ENCODE measurements at regions of chr10 and their contacts with region 1.

Region 1: DNA sequence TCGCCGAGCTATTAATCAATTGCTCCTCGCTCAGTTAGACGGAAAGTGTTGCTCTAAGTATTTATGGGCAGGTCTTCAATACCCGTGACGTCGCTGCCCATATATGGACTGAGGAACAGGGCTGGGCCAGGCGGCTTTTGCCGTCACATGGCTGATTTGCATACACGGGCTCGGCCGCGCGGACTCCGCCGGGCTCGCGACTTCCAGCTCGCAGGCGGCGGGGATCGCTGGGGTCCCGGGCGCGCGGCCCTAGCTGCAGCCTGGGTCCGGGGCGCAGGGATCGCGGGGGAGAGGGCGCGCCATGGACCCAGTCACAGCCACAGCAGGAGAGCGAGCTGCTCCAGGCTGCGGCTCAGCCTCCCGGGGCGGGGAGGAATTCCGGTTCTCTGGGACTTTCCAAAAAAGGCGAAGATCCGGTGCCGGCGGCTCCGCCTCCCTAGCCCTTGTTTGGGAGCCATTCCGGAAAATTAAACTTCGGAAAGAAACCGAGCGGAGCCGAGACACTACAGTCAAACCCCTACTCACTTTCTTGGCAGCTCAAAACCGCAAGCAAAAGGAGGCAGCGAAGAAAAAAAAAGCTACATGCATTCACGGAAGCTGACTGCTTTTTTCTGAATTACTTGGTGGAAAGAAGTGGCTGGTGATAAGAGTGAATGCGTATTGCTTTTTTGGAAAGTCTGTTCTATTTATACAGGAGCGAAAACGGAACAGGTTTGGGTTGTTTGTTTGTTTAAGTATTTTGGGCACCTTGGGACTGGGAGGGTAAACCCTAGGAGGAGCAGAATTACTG is at the start of gene EGR2:
- DNase-seq: peak; percentile 83
- H3K4me3 ChIP-seq: peak within 1 kb of the TSS; percentile 62 to 95 (median 68)
- H3K27ac ChIP-seq: peak within 1 kb of the TSS; percentile 79 to 93 (median 84)
- H3K4me1 ChIP-seq: peaks cover 21 to 46% (median 31%) of the 10 kb centered on the region in 3 donors
- H3K27me3 ChIP-seq: peaks cover 0 to 68% (median 8%) of the 10 kb centered on the region in 4 donors
- CTCF ChIP-seq: peak in 1 of 6 experiments; percentile 14
- POLR2A ChIP-seq: peak in 2 of 4 donors; percentile 1 to 27
- total RNA-seq, gene EGR2: under 0.01 to 0.62 (median 0.48) TPM

Region 2: GRCh38 chr10:62610649-62611229 is 205.8 kb before region 1 on chr10:
- intact Hi-C with region 1: loop called (anchors 10 kb)
- DNase-seq: no peak
- H3K4me3 ChIP-seq: no peak overlapping the region
- H3K27ac ChIP-seq: no peak overlapping the region
- H3K4me1 ChIP-seq: no peaks in the 10 kb centered on the region
- H3K27me3 ChIP-seq: peaks cover 0 to 7% (median 0%) of the 10 kb centered on the region in 4 donors
- CTCF ChIP-seq: peak in 5 of 6 experiments; percentile 30 to 65 (median 47)
- POLR2A ChIP-seq: no peak

Region 3: DNA sequence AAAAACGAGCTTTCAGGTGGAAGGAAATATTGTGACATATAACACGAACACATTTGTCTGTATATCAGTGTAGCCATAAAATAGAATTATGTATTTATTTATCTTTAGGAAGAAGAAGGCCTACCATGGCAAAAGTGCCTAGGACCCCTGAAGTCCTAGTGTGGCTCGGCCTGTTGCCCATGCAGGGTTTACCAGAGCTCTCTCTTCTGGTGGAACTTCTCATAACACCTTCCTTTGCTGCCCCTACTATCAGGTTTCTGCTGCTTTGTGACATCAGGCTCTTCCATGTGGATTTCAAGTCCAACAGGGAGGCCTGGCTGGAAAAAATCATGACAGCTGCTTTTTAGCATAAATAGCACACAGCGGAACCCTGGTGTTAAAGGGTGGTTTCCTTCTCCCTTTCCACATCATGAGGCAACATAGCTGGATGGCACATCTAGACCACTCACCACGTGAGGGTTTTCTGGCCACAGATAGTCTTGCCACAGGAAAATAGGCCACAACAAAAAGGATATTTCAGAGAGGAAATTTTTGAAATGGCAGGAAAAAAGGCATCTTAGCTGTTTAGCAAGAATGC is 56.8 kb before region 1 on chr10:
- intact Hi-C with region 1: no loop called
- DNase-seq: no peak
- H3K4me3 ChIP-seq: no peak overlapping the region
- H3K27ac ChIP-seq: peak overlapping the region in 2 of 4 donors; percentile 14 to 39
- H3K4me1 ChIP-seq: no peaks in the 10 kb centered on the region
- H3K27me3 ChIP-seq: no peaks in the 10 kb centered on the region
- CTCF ChIP-seq: no peak
- POLR2A ChIP-seq: no peak

Region 4: DNA sequence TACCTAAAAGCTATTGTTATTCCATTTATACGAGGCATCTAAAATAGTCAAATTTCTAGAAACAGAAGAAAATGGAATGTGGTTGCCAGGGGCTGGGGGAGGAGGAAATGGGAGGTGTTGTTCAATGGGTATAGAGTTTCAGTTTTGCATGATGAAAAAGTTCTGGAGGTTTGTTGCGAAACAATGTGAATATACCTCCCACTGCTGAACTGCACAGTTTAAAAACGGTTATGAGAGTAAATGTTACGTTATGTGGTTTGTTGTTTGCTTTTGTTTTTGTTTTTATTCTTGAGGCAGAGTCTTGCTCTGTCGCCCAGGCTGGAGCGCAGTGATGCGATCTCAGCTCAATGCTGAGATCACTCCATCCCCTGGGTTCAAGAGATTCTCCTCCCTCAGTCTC is 251.7 kb after region 1 on chr10:
- intact Hi-C with region 1: no loop called
- DNase-seq: no peak
- H3K4me3 ChIP-seq: no peak overlapping the region
- H3K27ac ChIP-seq: no peak overlapping the region
- H3K4me1 ChIP-seq: no peaks in the 10 kb centered on the region
- H3K27me3 ChIP-seq: peaks cover 0 to 15% (median 0%) of the 10 kb centered on the region in 4 donors
- CTCF ChIP-seq: no peak
- POLR2A ChIP-seq: no peak

Measured in esophagus squamous epithelium (tissue), 5 donors.